Motor neuron (in vitro differentiated cells): ENCODE measurements at regions of chr7 and their contacts with region 1.

Region 1: GRCh38 chr7:120554960-120555571 is 282.1 kb downstream of the KCND2 start:
- ATAC-seq: peak; percentile 72 to 89 (median 78)
- H3K4me3 ChIP-seq: no peak overlapping the region
- H3K27ac ChIP-seq: no peak overlapping the region
- H3K4me1 ChIP-seq: peaks cover 7 to 11% of the 10 kb centered on the region in 2 donors

Region 2: DNA sequence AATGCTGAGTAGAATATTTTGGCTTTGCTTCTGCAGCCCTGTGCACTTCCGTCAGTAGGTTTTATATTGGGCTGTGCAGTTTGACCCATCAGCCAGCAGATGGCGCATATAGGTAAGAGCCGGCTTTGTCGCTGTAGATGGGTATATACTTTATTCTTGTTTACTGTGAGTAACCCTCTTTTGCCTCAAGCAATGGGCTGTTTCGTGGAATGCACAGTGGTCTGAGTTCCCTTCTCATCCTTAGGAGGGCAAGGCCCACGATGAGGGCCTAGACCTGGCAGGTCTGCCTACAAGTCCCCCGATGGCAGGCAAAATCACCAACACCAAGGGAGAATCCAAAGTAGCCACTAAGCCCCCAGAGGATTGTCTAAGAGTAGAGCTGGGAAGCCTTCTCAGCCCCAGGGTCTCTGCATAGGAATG is 1285.0 kb before region 1 on chr7:
- in situ Hi-C with region 1: loop called in 1 of 9 experiments (anchors 25 kb)
- ATAC-seq: peak; percentile 58 to 95 (median 77)
- H3K4me3 ChIP-seq: no peak overlapping the region
- H3K27ac ChIP-seq: no peak overlapping the region
- H3K4me1 ChIP-seq: no peaks in the 10 kb centered on the region

Region 3: GRCh38 chr7:120733143-120733542 is 178.1 kb after region 1 on chr7:
- in situ Hi-C with region 1: no loop called
- ATAC-seq: peak in 6 of 8 experiments; percentile 46 to 94 (median 69)
- H3K4me3 ChIP-seq: no peak overlapping the region
- H3K27ac ChIP-seq: no peak overlapping the region
- H3K4me1 ChIP-seq: no peaks in the 10 kb centered on the region